ENCODE measurements at regions of chr3 and their contacts with region 1.

Region 1: GRCh38 chr3:52471371-52472238 is 16.2 kb downstream of the NISCH start:
- DNase-seq: peak; percentile 82
- H3K4me3 ChIP-seq: peak overlapping the region; percentile 12
- H3K27ac ChIP-seq: peak overlapping the region; percentile 75
- H3K4me1 ChIP-seq: peaks cover 59% of the 10 kb centered on the region
- H3K27me3 ChIP-seq: no peaks in the 10 kb centered on the region
- CTCF ChIP-seq: peak; percentile 86

Region 2: DNA sequence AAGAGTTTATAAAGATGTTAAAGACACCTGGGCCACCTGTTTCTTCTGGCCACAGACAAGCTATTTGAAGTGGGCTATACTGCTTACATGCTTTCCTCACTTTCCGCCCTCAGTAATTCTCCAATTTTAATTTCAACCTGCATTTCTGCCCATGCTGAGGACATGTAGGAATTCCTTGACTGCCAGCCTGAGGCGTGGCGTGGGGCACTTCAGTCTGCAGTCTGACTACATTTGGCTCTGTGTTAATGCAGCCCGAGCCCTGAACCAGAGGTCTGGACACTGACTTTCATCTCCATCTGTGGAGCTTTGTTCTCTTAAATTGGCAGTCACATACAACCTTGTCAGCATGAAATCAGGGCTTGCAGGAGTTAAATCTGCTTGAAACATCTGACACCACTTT is 73.3 kb after region 1 on chr3:
- intact Hi-C with region 1: loop called (anchors 10 kb)
- DNase-seq: no peak
- H3K4me3 ChIP-seq: no peak overlapping the region
- H3K27ac ChIP-seq: peak overlapping the region; percentile 21
- H3K4me1 ChIP-seq: peaks cover 52% of the 10 kb centered on the region
- H3K27me3 ChIP-seq: no peaks in the 10 kb centered on the region
- CTCF ChIP-seq: no peak

Measured in left ventricle myocardium inferior (tissue), 1 donor.